ENCODE measurements at regions of chr1 and their contacts with region 1.

Region 1: DNA sequence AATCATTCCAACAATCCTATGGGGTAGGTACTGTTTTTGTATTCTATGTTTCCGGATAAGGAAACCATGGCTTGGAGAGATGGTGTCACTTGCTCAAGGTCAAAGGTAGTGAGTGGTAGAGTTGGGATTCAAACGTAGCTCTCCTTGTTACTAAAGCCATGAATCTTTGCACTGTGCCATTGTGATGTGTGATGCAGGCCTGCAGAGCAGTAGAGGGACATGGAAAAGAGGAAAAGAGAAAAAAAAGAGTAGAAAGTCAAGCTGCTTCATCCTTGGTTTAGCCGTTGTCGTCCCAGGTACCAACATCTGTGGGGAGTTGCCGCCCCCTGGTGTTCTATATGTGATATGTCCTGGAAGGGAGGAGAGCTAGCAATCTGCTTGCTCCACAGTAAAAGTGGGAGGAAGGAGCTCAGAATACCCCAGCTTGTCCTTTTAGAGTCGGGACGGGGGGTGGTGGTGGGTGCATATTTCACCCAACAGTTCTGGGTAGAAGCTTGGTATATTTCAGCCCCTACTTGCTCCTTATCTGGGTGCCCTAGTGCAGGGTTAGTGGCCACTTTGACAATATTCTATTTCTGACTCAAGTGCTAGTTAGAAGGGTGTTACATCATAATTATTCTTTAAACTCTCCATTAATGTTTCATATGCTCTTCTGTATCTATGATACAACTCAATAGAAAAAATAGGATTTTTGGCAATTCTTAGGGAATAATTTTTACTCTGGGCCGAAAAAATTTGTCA is 98.4 kb downstream of the EBNA1BP2 start:
- DNase-seq: peak; percentile 56 to 73
- ATAC-seq: peak; percentile 93 to 97
- H3K4me3 ChIP-seq: no peak overlapping the region
- H3K27ac ChIP-seq: peak overlapping the region; percentile 52 to 66
- H3K4me1 ChIP-seq: peaks cover 10% of the 10 kb centered on the region; the same call in 2 of the 3 replicates
- CTCF ChIP-seq: peak; percentile 73
- EP300 ChIP-seq: no peak
- POLR2A ChIP-seq: no peak
- RAD21 ChIP-seq: peak; percentile 97 to 98

Region 2: DNA sequence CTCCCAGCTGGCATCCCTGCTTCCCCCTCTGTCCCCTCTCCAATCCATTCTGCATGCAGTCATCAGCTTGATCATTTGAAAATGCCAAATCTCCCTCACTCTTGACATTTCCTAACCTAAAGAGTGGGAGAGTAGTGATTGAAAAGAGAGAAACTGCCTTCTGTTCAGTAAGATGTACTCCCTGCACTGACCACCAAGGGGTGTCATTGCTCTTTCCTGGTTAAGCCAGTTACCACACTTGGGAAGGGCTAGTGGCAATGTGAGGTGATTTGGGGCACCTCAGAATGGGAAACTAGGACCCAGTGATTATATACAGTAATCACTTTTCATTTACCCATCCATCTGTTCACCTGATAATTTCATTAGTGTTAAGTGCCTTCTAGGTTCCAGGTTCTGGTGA is 295.8 kb before region 1 on chr1:
- CTCF ChIA-PET with region 1: interaction called, 79 read pairs
- POLR2A ChIA-PET with region 1: no interaction called
- DNase-seq: peak; percentile 43 to 60
- ATAC-seq: peak; percentile 81 to 83; a peak in 5 of 6 replicates
- H3K4me3 ChIP-seq: no peak overlapping the region
- H3K27ac ChIP-seq: no peak overlapping the region
- H3K4me1 ChIP-seq: no peaks in the 10 kb centered on the region
- CTCF ChIP-seq: peak; percentile 61
- EP300 ChIP-seq: no peak
- POLR2A ChIP-seq: no peak
- RAD21 ChIP-seq: peak; percentile 74 to 82

Region 3: GRCh38 chr1:42924082-42924850 is 149.4 kb before region 1 on chr1:
- CTCF ChIA-PET with region 1: interaction called, 280 read pairs
- POLR2A ChIA-PET with region 1: interaction called, 6 read pairs
- DNase-seq: peak; percentile 78 to 91
- ATAC-seq: peak; percentile 87 to 93
- H3K4me3 ChIP-seq: peak overlapping the region; percentile 54
- H3K27ac ChIP-seq: peak overlapping the region; percentile 93 to 99
- H3K4me1 ChIP-seq: peaks cover 40% of the 10 kb centered on the region
- CTCF ChIP-seq: no peak
- EP300 ChIP-seq: no peak
- POLR2A ChIP-seq: peak; percentile 56
- RAD21 ChIP-seq: peak in 1 of 2 experiments; percentile 24; a peak in 1 of 5 replicates

Region 4: GRCh38 chr1:42941640-42942330 is 131.9 kb before region 1 on chr1:
- CTCF ChIA-PET with region 1: interaction called, 38 read pairs
- POLR2A ChIA-PET with region 1: no interaction called
- DNase-seq: peak in 1 of 2 experiments; percentile 91
- ATAC-seq: peak; percentile 48 to 49
- H3K4me3 ChIP-seq: 0 out of 3 replicates have a peak overlapping the region, but pooled peaks have one; percentile 16
- H3K27ac ChIP-seq: peak overlapping the region; percentile 91 to 99
- H3K4me1 ChIP-seq: peaks cover 100% of the 10 kb centered on the region
- CTCF ChIP-seq: no peak
- EP300 ChIP-seq: no peak
- POLR2A ChIP-seq: no peak
- RAD21 ChIP-seq: peak in 1 of 2 experiments; percentile 7; a peak in 1 of 5 replicates

Region 5: GRCh38 chr1:42974767-42975437 is 98.8 kb before region 1 on chr1:
- CTCF ChIA-PET with region 1: interaction called, 12 read pairs
- POLR2A ChIA-PET with region 1: no interaction called
- DNase-seq: no peak
- ATAC-seq: no peak
- H3K4me3 ChIP-seq: no peak overlapping the region
- H3K27ac ChIP-seq: no peak overlapping the region
- H3K4me1 ChIP-seq: peaks cover 9% of the 10 kb centered on the region; the same call in 2 of the 3 replicates
- CTCF ChIP-seq: no peak
- EP300 ChIP-seq: no peak
- POLR2A ChIP-seq: no peak
- RAD21 ChIP-seq: no peak

Region 6: GRCh38 chr1:43098200-43098599 is 24.5 kb after region 1 on chr1:
- CTCF ChIA-PET with region 1: interaction called, 16 read pairs
- POLR2A ChIA-PET with region 1: no interaction called
- DNase-seq: no peak
- ATAC-seq: no peak
- H3K4me3 ChIP-seq: no peak overlapping the region
- H3K27ac ChIP-seq: no peak overlapping the region
- H3K4me1 ChIP-seq: no peaks in the 10 kb centered on the region
- CTCF ChIP-seq: no peak
- EP300 ChIP-seq: no peak
- POLR2A ChIP-seq: no peak
- RAD21 ChIP-seq: no peak

Region 7: DNA sequence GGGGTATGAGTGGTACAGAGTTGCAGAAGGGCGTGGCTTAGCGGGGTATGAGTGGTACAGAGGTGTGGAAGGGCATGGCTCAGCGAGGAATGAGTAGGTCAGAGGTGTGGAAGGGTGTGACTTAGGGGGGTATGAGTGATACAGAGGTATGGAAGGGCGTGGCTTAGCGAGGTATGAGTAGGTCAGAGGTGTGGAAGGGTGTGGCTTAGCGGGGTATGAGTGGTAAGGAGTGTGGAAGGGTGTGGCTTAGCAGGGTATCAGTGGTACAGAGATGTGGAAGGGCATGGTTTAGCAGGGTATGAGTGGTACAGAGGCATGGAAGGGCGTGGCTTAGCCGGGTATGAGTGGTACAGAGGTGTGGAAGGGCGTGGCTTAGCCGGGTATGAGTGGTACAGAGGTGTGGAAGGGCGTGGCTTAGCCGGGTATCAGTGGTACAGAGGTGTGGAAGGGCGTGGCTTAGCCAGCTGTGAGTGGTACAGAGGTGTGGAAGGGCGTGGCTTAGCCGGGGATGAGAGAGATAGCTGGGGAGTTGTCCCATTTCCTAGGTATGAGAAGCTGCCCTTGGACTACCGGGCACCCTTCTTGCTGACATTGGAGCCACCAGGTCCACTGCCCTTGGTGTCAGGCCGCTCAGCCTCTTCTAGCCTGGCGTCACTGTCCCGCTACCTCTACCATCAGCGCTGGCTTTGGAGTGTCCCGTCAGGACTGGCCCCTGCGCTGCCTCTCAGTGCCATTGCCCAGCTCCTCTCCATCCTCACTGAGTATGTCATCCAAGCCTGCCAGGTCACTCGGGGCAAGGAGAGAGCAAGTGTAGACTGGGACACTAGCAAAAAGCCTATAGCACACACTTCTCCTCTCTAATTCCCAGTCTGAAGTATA is 350.3 kb after region 1 on chr1:
- CTCF ChIA-PET with region 1: no interaction called
- POLR2A ChIA-PET with region 1: no interaction called
- DNase-seq: peak in 1 of 2 experiments; percentile 28
- ATAC-seq: peak in 1 of 2 experiments; percentile 35; a peak in 2 of 6 replicates
- H3K4me3 ChIP-seq: no peak overlapping the region
- H3K27ac ChIP-seq: no peak overlapping the region
- H3K4me1 ChIP-seq: peaks cover 7% of the 10 kb centered on the region; the same call in 1 of the 3 replicates
- CTCF ChIP-seq: no peak
- EP300 ChIP-seq: no peak
- POLR2A ChIP-seq: no peak
- RAD21 ChIP-seq: no peak

Measured in A549 (cell line).